Heart left ventricle (tissue), 16 donors: ENCODE measurements at regions of chr7 and their contacts with region 1.

Region 1: DNA sequence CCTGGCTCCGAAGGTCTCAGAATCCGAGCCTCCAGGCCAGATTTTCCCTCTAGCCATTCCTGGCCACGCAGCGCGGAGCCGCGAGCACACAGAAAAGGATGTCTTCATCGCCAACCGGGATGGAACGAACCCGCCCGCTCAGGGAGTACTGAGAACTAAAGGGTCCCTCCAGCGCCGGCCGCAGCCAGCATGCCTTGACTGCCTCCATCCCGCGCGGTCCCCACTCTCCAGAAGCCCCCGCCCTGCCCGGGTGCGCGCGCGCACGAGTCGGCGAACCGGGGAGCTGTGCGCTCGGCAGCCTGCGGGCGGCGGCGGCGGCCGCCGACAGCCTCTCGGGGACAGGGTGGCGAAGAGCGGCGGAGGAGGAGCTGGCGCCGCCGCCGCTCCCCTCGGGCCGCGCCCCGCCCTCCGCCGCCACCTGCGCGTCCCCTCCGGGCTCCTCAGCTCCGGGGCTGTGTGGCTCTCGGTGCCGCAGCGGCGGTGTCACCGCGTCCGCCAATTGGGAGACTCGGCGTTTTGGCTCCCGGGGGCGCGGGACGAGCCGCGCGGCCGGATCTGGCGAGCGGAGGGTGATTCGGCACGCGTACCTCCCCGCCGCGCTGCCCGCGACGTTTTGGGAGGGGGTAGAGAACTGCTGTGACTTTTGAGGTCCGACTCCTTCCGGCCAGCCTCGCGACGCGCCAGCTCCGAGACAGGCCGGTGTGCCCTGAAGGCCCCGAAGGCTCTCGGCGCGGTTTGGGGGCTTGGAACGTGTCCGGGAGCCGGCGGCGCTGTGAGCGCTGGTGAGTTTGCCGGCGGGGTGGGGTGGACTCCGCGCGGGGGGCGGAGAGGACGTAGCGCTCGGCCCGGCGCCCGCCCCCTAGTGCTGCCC is 453 bp upstream of the GALNT17 start:
- DNase-seq: peak; percentile 51 to 72 (median 68)
- ATAC-seq: peak; percentile 51 to 92 (median 86)
- H3K4me3 ChIP-seq: peak overlapping the region; percentile 48 to 73 (median 60)
- H3K27ac ChIP-seq: peak overlapping the region; percentile 61 to 91 (median 81)
- H3K4me1 ChIP-seq: peaks cover 0 to 18% (median 0%) of the 10 kb centered on the region in 12 donors
- H3K27me3 ChIP-seq: peaks cover 0 to 40% (median 8%) of the 10 kb centered on the region in 9 donors
- CTCF ChIP-seq: peak in 7 of 12 donors; percentile 5 to 43 (median 37)
- POLR2A ChIP-seq: no peak

Region 2: GRCh38 chr7:71210220-71210619 is 78.7 kb after region 1 on chr7:
- intact Hi-C with region 1: loop called in 1 of 10 experiments (anchors 10 kb)
- DNase-seq: no peak
- ATAC-seq: no peak
- H3K4me3 ChIP-seq: no peak overlapping the region
- H3K27ac ChIP-seq: no peak overlapping the region
- H3K4me1 ChIP-seq: peaks cover 0 to 9% (median 0%) of the 10 kb centered on the region in 12 donors
- H3K27me3 ChIP-seq: no peaks in the 10 kb centered on the region
- CTCF ChIP-seq: no peak
- POLR2A ChIP-seq: no peak

Region 3: GRCh38 chr7:71237945-71238344 is 106.5 kb after region 1 on chr7:
- intact Hi-C with region 1: loop called in 6 of 10 experiments (anchors 5 to 10 kb)
- DNase-seq: peak in 4 of 5 donors; percentile 32 to 74 (median 46)
- ATAC-seq: peak; percentile 85 to 90 (median 88)
- H3K4me3 ChIP-seq: no peak overlapping the region
- H3K27ac ChIP-seq: peak overlapping the region in 11 of 12 donors; percentile 50 to 96 (median 84)
- H3K4me1 ChIP-seq: peaks cover 0 to 40% (median 17%) of the 10 kb centered on the region in 12 donors
- H3K27me3 ChIP-seq: no peaks in the 10 kb centered on the region
- CTCF ChIP-seq: peak in 10 of 12 donors; percentile 9 to 59 (median 30)
- POLR2A ChIP-seq: no peak

Region 4: DNA sequence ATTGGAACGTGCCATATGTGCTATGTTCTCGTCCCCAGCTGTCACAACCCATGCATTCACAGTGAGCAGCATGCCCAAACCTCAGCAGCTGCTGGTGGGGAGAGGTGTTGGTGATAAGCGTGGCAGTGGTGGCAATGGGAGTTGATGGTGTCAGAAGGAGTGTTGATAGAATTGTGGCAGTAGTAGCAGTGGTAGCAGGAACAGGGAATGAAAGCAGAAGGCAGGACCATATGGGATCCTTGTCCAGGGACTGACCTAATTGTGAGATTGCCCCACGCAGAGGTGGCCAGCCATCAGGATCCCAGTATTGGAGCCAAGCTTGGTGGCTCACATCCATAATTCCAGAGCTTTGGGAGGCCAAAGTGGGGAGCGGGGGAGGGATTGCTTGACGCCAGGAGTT is 276.8 kb after region 1 on chr7:
- intact Hi-C with region 1: loop called in 2 of 10 experiments (anchors 5 to 10 kb)
- DNase-seq: peak; percentile 61 to 90 (median 77)
- ATAC-seq: peak; percentile 95 to 96 (median 96)
- H3K4me3 ChIP-seq: no peak overlapping the region
- H3K27ac ChIP-seq: peak overlapping the region in 7 of 12 donors; percentile 19 to 72 (median 54)
- H3K4me1 ChIP-seq: peaks cover 0 to 33% (median 0%) of the 10 kb centered on the region in 12 donors
- H3K27me3 ChIP-seq: no peaks in the 10 kb centered on the region
- CTCF ChIP-seq: no peak
- POLR2A ChIP-seq: no peak

Region 5: DNA sequence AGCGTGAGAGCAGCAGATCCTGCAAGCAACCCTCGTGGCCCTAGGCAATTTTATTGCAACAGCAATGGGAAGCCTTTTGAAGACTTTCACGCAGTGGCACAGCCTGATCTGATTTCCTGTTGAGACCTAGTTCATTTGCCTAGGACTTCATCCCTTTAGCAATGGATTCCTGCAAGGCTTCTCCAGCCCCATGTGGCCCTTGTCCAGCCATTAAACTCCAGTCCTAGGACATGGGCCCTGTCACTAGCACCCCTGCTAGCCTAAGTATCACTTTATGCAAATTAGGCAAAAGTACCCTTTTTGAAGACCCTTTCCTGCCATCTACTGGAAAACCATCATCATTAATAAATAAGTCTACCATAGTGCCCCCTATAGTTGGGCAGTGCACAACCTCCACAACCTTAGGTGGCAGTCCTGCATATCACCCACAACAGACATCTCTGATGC is 379.9 kb after region 1 on chr7:
- intact Hi-C with region 1: loop called in 2 of 10 experiments (anchors 10 kb)
- DNase-seq: no peak
- ATAC-seq: peak in 1 of 4 donors; percentile 30
- H3K4me3 ChIP-seq: no peak overlapping the region
- H3K27ac ChIP-seq: no peak overlapping the region
- H3K4me1 ChIP-seq: no peaks in the 10 kb centered on the region
- H3K27me3 ChIP-seq: no peaks in the 10 kb centered on the region
- CTCF ChIP-seq: peak in 2 of 12 donors; percentile 16 to 29
- POLR2A ChIP-seq: no peak